HepG2 (cell line): ENCODE measurements at regions of chr3 and their contacts with region 1.

Region 1: DNA sequence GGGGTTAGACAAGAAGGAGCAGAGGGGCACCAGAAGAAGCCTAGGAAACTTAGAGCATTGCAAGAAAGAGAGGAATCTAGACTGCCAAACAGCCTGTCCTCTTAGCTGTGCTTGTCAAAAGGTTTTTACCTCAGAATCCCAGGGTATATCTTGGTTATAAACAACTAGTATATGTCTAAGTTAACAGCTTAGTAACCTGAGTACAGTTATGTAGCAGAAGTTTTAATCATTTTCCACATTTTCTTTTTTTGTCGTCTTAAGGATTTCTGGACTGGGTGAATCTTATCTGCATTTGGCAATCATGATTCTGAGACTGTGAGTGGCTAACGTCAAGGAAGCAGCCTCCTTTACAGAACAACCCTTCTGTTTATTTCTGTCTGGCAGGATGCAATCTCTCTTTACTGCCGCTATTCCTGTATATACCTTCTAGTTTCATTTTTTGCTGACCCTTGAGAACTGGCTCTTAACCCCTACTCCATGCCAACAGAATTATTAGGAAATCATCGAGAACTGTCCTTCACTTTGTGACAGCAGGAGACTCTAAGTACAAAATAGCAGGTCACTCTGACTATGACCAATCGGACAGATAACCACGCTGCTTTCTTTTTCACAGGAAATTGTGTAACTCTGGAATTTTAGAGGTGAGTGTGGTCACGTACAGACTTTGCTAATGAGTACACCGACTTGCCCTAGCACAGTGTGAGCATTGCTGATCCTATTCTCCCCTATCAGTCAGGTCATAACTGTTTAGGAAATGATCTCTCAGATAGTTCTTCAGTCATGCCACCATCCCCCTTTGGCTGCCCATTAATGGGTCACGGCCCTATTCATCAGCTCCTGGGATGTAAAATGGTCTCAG is 3.3 kb upstream of the CP start:
- DNase-seq: peak; percentile 98
- ATAC-seq: peak; percentile 84
- H3K4me3 ChIP-seq: peak overlapping the region; percentile 44 to 78 (median 64)
- H3K27ac ChIP-seq: peak overlapping the region; percentile 99
- H3K4me1 ChIP-seq: peaks cover 58% of the 10 kb centered on the region
- H3K27me3 ChIP-seq: no peaks in the 10 kb centered on the region; a peak in 1 of 5 replicates
- CTCF ChIP-seq: no peak
- EP300 ChIP-seq: peak; percentile 69 to 97; a peak in 3 of 4 replicates
- POLR2A ChIP-seq: peak; percentile 66 to 74
- RAD21 ChIP-seq: no peak

Region 2: GRCh38 chr3:149009732-149010131 is 215.2 kb before region 1 on chr3:
- CTCF ChIA-PET with region 1: no interaction called
- POLR2A ChIA-PET with region 1: no interaction called
- in situ Hi-C with region 1: no loop called
- intact Hi-C with region 1: loop called (anchors 10 kb)
- DNase-seq: no peak
- ATAC-seq: no peak
- H3K4me3 ChIP-seq: no peak overlapping the region
- H3K27ac ChIP-seq: peak overlapping the region; percentile 84
- H3K4me1 ChIP-seq: peaks cover 28% of the 10 kb centered on the region
- H3K27me3 ChIP-seq: no peaks in the 10 kb centered on the region
- CTCF ChIP-seq: no peak
- EP300 ChIP-seq: no peak
- POLR2A ChIP-seq: no peak
- RAD21 ChIP-seq: no peak

Region 3: DNA sequence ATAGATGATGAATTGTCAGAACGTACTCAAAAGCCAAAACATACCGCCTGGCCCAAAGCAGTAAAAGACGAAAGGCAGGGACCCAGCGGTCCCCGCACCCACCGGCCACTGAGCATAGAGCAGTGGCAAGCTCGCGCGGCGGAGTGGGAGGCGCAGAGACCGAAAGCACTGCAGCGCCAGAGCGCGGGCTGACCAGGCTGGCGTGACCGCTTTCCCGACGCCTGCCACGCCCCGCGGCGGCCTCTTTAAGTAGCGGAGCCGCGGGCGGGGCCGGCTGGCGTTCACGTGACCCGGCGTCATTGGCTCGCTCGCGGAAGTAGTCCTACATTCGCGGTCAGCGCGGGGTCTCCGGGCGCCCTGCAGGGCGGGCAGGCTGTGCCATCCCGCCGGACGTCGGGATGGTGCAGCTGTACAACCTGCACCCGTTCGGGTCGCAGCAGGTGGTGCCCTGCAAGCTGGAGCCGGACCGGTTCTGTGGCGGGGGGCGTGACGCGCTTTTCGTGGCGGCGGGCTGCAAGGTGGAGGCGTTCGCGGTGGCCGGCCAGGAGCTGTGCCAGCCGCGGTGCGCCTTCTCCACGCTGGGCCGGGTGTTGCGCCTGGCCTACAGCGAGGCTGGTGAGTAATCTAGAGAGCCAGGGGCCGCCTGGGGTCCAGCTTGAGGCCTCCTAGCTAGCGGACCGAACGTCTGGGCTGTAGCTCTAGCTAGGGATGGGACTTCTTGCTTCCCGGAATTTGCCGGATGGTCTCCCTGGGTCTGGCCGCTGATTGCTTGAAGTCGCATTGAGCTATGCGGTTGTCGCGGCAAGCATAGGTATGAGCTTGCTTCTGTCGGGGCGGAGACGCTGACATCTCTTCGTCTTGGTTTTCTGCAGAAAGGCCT is 95.4 kb before region 1 on chr3 and contains the start of gene HPS3:
- CTCF ChIA-PET with region 1: no interaction called
- POLR2A ChIA-PET with region 1: interaction called, 6 read pairs
- in situ Hi-C with region 1: no loop called
- intact Hi-C with region 1: loop called (anchors 1 kb)
- DNase-seq: peak; percentile 79
- ATAC-seq: peak; percentile 96
- H3K4me3 ChIP-seq: peak within 1 kb of the TSS; percentile 78 to 95 (median 92)
- H3K27ac ChIP-seq: peak within 1 kb of the TSS; percentile 74
- H3K4me1 ChIP-seq: peaks cover 47% of the 10 kb centered on the region
- H3K27me3 ChIP-seq: no peaks in the 10 kb centered on the region; a peak in 1 of 5 replicates
- CTCF ChIP-seq: peak; percentile 16; the same call in 1 of the 2 replicates
- EP300 ChIP-seq: 0 out of 4 replicates have a peak, but pooled peaks of 1 of the 2 experiments have one; percentile 6
- POLR2A ChIP-seq: peak; percentile 90 to 92
- RAD21 ChIP-seq: peak; percentile 38; the same call in 1 of the 2 replicates
- total RNA-seq, gene HPS3: 18.9 and 23.6 TPM in 2 replicates

Region 4: GRCh38 chr3:149245738-149246451 is 20.9 kb after region 1 on chr3:
- CTCF ChIA-PET with region 1: no interaction called
- POLR2A ChIA-PET with region 1: interaction called, 4 read pairs
- in situ Hi-C with region 1: no loop called
- intact Hi-C with region 1: loop called (anchors 2 kb)
- DNase-seq: peak; percentile 75
- ATAC-seq: peak; percentile 86
- H3K4me3 ChIP-seq: no peak overlapping the region
- H3K27ac ChIP-seq: peak overlapping the region; percentile 47
- H3K4me1 ChIP-seq: peaks cover 58% of the 10 kb centered on the region
- H3K27me3 ChIP-seq: no peaks in the 10 kb centered on the region
- CTCF ChIP-seq: no peak
- EP300 ChIP-seq: no peak
- POLR2A ChIP-seq: no peak
- RAD21 ChIP-seq: no peak

Region 5: GRCh38 chr3:149273096-149273751 is 48.3 kb after region 1 on chr3:
- CTCF ChIA-PET with region 1: no interaction called
- POLR2A ChIA-PET with region 1: no interaction called
- in situ Hi-C with region 1: no loop called
- intact Hi-C with region 1: loop called (anchors 2 kb)
- DNase-seq: peak; percentile 81
- ATAC-seq: peak; percentile 81
- H3K4me3 ChIP-seq: no peak overlapping the region
- H3K27ac ChIP-seq: no peak overlapping the region
- H3K4me1 ChIP-seq: peaks cover 44% of the 10 kb centered on the region
- H3K27me3 ChIP-seq: no peaks in the 10 kb centered on the region
- CTCF ChIP-seq: peak; percentile 96
- EP300 ChIP-seq: no peak
- POLR2A ChIP-seq: no peak
- RAD21 ChIP-seq: peak; percentile 96

Region 6: GRCh38 chr3:149364624-149365023 is 139.7 kb after region 1 on chr3:
- CTCF ChIA-PET with region 1: no interaction called
- POLR2A ChIA-PET with region 1: no interaction called
- in situ Hi-C with region 1: no loop called
- intact Hi-C with region 1: no loop called
- DNase-seq: no peak
- ATAC-seq: no peak
- H3K4me3 ChIP-seq: no peak overlapping the region
- H3K27ac ChIP-seq: no peak overlapping the region
- H3K4me1 ChIP-seq: peaks cover 55% of the 10 kb centered on the region
- H3K27me3 ChIP-seq: no peaks in the 10 kb centered on the region
- CTCF ChIP-seq: no peak
- EP300 ChIP-seq: no peak
- POLR2A ChIP-seq: no peak
- RAD21 ChIP-seq: no peak

Region 7: GRCh38 chr3:149384911-149385321 is 160.0 kb after region 1 on chr3:
- CTCF ChIA-PET with region 1: no interaction called
- POLR2A ChIA-PET with region 1: no interaction called
- in situ Hi-C with region 1: no loop called
- intact Hi-C with region 1: loop called (anchors 5 kb)
- DNase-seq: peak; percentile 78
- ATAC-seq: peak; percentile 23
- H3K4me3 ChIP-seq: peak overlapping the region; percentile 42 to 69 (median 66)
- H3K27ac ChIP-seq: peak overlapping the region; percentile 100
- H3K4me1 ChIP-seq: peaks cover 84% of the 10 kb centered on the region
- H3K27me3 ChIP-seq: no peaks in the 10 kb centered on the region; a peak in 1 of 5 replicates
- CTCF ChIP-seq: no peak
- EP300 ChIP-seq: peak in 1 of 2 experiments; percentile 39; a peak in 1 of 4 replicates
- POLR2A ChIP-seq: peak; percentile 63 to 71
- RAD21 ChIP-seq: no peak

Region 8: DNA sequence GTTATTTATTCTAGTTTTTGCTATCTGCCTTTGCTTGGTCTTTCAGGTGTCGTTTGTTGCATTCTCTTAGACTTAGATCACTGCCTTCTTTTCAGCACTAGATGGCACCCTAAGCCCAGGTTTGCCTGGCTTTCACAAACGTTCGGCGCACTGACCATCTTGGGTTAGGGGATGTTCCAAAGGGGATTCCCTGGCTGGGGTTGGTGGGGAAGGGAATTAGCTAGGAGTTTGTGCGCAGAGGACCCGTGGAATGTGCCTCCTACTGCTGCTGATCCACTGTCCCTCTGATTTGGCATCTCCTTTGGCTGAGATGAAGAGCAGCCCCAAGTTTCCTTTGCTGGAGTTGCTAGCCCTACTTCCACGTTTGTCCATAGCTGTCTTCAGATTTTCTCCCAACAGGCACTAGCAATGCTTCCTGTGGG is 711.9 kb after region 1 on chr3:
- CTCF ChIA-PET with region 1: no interaction called
- POLR2A ChIA-PET with region 1: no interaction called
- in situ Hi-C with region 1: no loop called
- intact Hi-C with region 1: no loop called
- DNase-seq: peak; percentile 47
- ATAC-seq: peak; percentile 88
- H3K4me3 ChIP-seq: no peak overlapping the region
- H3K27ac ChIP-seq: no peak overlapping the region
- H3K4me1 ChIP-seq: no peaks in the 10 kb centered on the region
- H3K27me3 ChIP-seq: no peaks in the 10 kb centered on the region
- CTCF ChIP-seq: peak; percentile 88
- EP300 ChIP-seq: no peak
- POLR2A ChIP-seq: no peak
- RAD21 ChIP-seq: peak; percentile 67

Region 9: GRCh38 chr3:151117051-151117450 is 1892.1 kb after region 1 on chr3:
- CTCF ChIA-PET with region 1: no interaction called
- POLR2A ChIA-PET with region 1: no interaction called
- in situ Hi-C with region 1: no loop called
- intact Hi-C with region 1: no loop called
- DNase-seq: no peak
- ATAC-seq: no peak
- H3K4me3 ChIP-seq: no peak overlapping the region
- H3K27ac ChIP-seq: no peak overlapping the region
- H3K4me1 ChIP-seq: no peaks in the 10 kb centered on the region
- H3K27me3 ChIP-seq: no peaks in the 10 kb centered on the region; a peak in 1 of 5 replicates
- CTCF ChIP-seq: no peak
- EP300 ChIP-seq: no peak
- POLR2A ChIP-seq: no peak
- RAD21 ChIP-seq: no peak